ENCODE measurements at regions of chr1 and their contacts with region 1.

Region 1: GRCh38 chr1:9128520-9129265 is at the start of gene GPR157:
- DNase-seq: no peak
- ATAC-seq: peak; percentile 81
- H3K4me3 ChIP-seq: peak within 1 kb of the TSS; percentile 85
- H3K27ac ChIP-seq: peak within 1 kb of the TSS; percentile 23
- H3K4me1 ChIP-seq: peaks cover 28% of the 10 kb centered on the region
- H3K27me3 ChIP-seq: no peaks in the 10 kb centered on the region
- CTCF ChIP-seq: peak in 2 of 3 experiments; percentile 8 to 26; a peak in 1 of 6 replicates
- EP300 ChIP-seq: no peak
- POLR2A ChIP-seq: peak; percentile 31; the same call in 1 of the 2 replicates
- RAD21 ChIP-seq: no peak
- polyA plus RNA-seq, gene GPR157: 0.66 to 1.1 TPM

Region 2: GRCh38 chr1:9166289-9167235 is 37.9 kb after region 1 on chr1:
- CTCF ChIA-PET with region 1: interaction called, 3 read pairs
- POLR2A ChIA-PET with region 1: interaction called, 7 read pairs
- RAD21 ChIA-PET with region 1: interaction called, 6 read pairs
- SMC1A ChIA-PET with region 1: interaction called, 6 read pairs
- in situ Hi-C with region 1: no loop called
- intact Hi-C with region 1: loop called (anchors 5 kb)
- DNase-seq: no peak
- ATAC-seq: no peak
- H3K4me3 ChIP-seq: no peak overlapping the region
- H3K27ac ChIP-seq: no peak overlapping the region
- H3K4me1 ChIP-seq: peaks cover 39% of the 10 kb centered on the region
- H3K27me3 ChIP-seq: no peaks in the 10 kb centered on the region
- CTCF ChIP-seq: no peak
- EP300 ChIP-seq: no peak
- POLR2A ChIP-seq: no peak
- RAD21 ChIP-seq: no peak